OCI-LY7 (cell line): ENCODE measurements at regions of chr3 and their contacts with region 1.

Region 1: GRCh38 chr3:120567370-120568201 is 28.6 kb upstream of the NDUFB4 start:
- DNase-seq: peak; percentile 48
- H3K4me3 ChIP-seq: peak overlapping the region; percentile 31
- H3K27ac ChIP-seq: no peak overlapping the region
- H3K4me1 ChIP-seq: no peaks in the 10 kb centered on the region
- CTCF ChIP-seq: peak; percentile 73

Region 2: GRCh38 chr3:120299403-120299802 is 268.2 kb before region 1 on chr3:
- CTCF ChIA-PET with region 1: no interaction called
- POLR2A ChIA-PET with region 1: no interaction called
- intact Hi-C with region 1: no loop called
- DNase-seq: no peak
- H3K4me3 ChIP-seq: no peak overlapping the region
- H3K27ac ChIP-seq: no peak overlapping the region
- H3K4me1 ChIP-seq: no peaks in the 10 kb centered on the region
- CTCF ChIP-seq: no peak

Region 3: GRCh38 chr3:120487191-120487650 is 80.4 kb before region 1 on chr3:
- CTCF ChIA-PET with region 1: no interaction called
- POLR2A ChIA-PET with region 1: no interaction called
- intact Hi-C with region 1: no loop called
- DNase-seq: no peak
- H3K4me3 ChIP-seq: no peak overlapping the region
- H3K27ac ChIP-seq: no peak overlapping the region
- H3K4me1 ChIP-seq: no peaks in the 10 kb centered on the region
- CTCF ChIP-seq: no peak

Region 4: DNA sequence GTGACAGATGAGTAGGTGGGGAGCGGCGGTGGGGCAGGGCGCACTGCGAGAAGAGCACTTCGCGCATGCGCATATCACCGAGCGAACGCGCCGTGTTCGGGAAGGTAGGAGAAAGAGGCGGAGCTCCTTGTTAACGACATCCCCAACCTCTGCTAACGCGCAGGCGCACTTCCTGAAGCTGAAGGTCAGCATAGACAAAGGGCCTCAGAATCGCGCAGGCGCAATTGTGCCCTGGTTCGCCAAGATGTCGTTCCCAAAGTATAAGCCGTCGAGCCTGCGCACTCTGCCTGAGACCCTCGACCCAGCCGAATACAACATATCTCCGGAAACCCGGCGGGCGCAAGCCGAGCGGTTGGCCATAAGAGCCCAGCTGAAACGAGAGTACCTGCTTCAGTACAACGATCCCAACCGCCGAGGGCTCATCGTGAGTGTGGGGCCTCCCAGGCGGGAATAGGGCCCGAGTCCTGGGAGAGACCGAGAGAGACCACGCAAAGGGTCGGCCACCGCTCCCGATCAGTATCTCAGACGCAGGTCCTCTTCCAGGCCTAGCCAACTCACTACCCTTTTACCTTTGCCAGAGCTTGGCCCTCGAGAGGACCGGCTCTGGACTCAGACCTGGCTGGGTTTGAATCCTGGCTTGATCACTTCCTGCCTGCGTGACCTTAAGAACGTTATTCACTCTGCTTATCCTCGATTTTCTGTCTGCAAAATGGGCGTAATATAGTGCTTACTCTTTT is 28.7 kb after region 1 on chr3 and contains the start of gene NDUFB4:
- CTCF ChIA-PET with region 1: interaction called, 6 read pairs
- POLR2A ChIA-PET with region 1: interaction called, 12 read pairs
- intact Hi-C with region 1: no loop called
- DNase-seq: peak; percentile 99
- H3K4me3 ChIP-seq: peak within 1 kb of the TSS; percentile 83
- H3K27ac ChIP-seq: peak within 1 kb of the TSS; percentile 61
- H3K4me1 ChIP-seq: peaks cover 16% of the 10 kb centered on the region
- CTCF ChIP-seq: no peak
- total RNA-seq, gene NDUFB4: 77.3 and 130 TPM in 2 replicates